K562 (cell line): ENCODE measurements at regions of chr3 and their contacts with region 1.

Region 1: GRCh38 chr3:196471551-196471950 is 32.0 kb downstream of the RNF168 start:
- DNase-seq: no peak
- ATAC-seq: no peak
- H3K4me3 ChIP-seq: no peak overlapping the region
- H3K27ac ChIP-seq: no peak overlapping the region
- H3K4me1 ChIP-seq: no peaks in the 10 kb centered on the region
- H3K27me3 ChIP-seq: no peaks in the 10 kb centered on the region
- CTCF ChIP-seq: no peak
- EP300 ChIP-seq: no peak
- POLR2A ChIP-seq: no peak
- RAD21 ChIP-seq: no peak

Region 2: GRCh38 chr3:196486263-196486662 is 14.7 kb after region 1 on chr3:
- CTCF ChIA-PET with region 1: no interaction called
- POLR2A ChIA-PET with region 1: interaction called, 11 read pairs
- in situ Hi-C with region 1: no loop called
- intact Hi-C with region 1: no loop called
- DNase-seq: peak in 1 of 4 experiments; percentile 52
- ATAC-seq: peak; percentile 86
- H3K4me3 ChIP-seq: no peak overlapping the region
- H3K27ac ChIP-seq: no peak overlapping the region
- H3K4me1 ChIP-seq: no peaks in the 10 kb centered on the region
- H3K27me3 ChIP-seq: no peaks in the 10 kb centered on the region
- CTCF ChIP-seq: peak; percentile 54 to 62 (median 59); a peak in 5 of 6 replicates
- EP300 ChIP-seq: no peak
- POLR2A ChIP-seq: no peak
- RAD21 ChIP-seq: peak; percentile 38 to 58

Region 3: DNA sequence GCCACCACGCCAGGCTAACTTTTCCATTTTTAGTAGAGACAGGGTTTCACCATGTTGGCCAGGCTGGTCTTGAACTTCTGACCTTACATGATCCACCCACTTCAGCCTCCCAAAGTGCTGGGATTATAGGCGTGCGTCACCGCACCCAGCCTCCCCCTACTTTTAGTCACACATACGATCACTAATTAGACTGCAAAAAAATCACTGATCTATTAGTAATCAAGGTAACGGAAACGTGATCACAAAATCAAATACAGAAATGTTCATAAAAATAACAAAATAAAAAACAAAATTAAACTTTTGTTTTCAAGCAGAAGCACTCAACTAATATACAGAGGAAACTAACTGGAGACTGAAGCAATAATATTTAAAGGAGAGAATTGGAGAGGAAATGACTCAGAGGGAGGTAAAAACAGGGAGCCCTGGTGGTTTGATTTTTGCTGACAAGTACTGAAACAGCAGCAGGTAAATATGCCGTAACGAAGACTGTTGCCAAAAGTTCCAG is 92.2 kb after region 1 on chr3:
- CTCF ChIA-PET with region 1: no interaction called
- POLR2A ChIA-PET with region 1: no interaction called
- in situ Hi-C with region 1: no loop called
- intact Hi-C with region 1: no loop called
- DNase-seq: peak in 3 of 4 experiments; percentile 25 to 57 (median 54)
- ATAC-seq: peak; percentile 20; the same call in 2 of the 3 replicates
- H3K4me3 ChIP-seq: no peak overlapping the region
- H3K27ac ChIP-seq: peak overlapping the region; percentile 43; the same call in 1 of the 3 replicates
- H3K4me1 ChIP-seq: peaks cover 13 to 15% of the 10 kb centered on the region in 2 experiments
- H3K27me3 ChIP-seq: no peaks in the 10 kb centered on the region
- CTCF ChIP-seq: no peak
- EP300 ChIP-seq: no peak
- POLR2A ChIP-seq: no peak
- RAD21 ChIP-seq: no peak